AG04450 (cell line): ENCODE measurements at regions of chr11 and their contacts with region 1.

Region 1: GRCh38 chr11:18492888-18493287 is 33.9 kb downstream of the TSG101 start:
- DNase-seq: no peak
- H3K4me3 ChIP-seq: no peak overlapping the region
- H3K27ac ChIP-seq: no peak overlapping the region
- H3K27me3 ChIP-seq: no peaks in the 10 kb centered on the region
- CTCF ChIP-seq: no peak

Region 2: DNA sequence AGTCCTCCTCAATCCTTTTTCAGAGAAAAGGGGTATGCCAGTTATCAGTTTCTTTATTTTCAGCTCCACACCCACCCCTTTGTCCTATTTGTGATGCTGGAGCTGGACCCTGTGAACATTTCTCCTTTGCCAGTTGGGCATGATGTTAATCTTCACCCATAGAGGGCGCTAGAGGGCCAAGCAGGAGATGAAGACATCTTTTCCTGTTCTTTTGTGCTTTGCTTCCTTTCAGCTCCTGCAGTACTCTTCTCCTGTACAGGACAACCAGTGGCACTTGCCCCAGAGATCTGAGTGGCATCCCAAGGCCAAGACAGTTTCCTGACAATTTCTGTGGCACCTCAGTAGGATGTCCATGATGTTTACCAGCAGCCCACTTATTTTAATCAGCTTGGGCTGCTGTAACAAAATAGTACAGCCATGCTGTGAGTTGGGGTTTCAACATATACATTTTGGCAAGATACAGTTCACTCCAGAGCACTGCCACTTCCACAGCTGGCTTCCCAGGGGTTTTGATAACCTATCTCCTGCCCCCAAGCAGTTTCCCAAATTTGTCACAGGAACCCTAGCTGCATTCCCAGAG is 249.0 kb before region 1 on chr11:
- CTCF ChIA-PET with region 1: interaction called, 11 read pairs
- POLR2A ChIA-PET with region 1: no interaction called
- DNase-seq: peak; percentile 45
- H3K4me3 ChIP-seq: no peak overlapping the region
- H3K27ac ChIP-seq: no peak overlapping the region
- H3K27me3 ChIP-seq: peaks cover 8% of the 10 kb centered on the region
- CTCF ChIP-seq: peak; percentile 92